Activated CD4-positive, alpha-beta memory T cell treated with anti-CD3 and anti-CD28 coated beads for 36 hours (primary cell): ENCODE measurements at regions of chr1 and their contacts with region 1.

Region 1: DNA sequence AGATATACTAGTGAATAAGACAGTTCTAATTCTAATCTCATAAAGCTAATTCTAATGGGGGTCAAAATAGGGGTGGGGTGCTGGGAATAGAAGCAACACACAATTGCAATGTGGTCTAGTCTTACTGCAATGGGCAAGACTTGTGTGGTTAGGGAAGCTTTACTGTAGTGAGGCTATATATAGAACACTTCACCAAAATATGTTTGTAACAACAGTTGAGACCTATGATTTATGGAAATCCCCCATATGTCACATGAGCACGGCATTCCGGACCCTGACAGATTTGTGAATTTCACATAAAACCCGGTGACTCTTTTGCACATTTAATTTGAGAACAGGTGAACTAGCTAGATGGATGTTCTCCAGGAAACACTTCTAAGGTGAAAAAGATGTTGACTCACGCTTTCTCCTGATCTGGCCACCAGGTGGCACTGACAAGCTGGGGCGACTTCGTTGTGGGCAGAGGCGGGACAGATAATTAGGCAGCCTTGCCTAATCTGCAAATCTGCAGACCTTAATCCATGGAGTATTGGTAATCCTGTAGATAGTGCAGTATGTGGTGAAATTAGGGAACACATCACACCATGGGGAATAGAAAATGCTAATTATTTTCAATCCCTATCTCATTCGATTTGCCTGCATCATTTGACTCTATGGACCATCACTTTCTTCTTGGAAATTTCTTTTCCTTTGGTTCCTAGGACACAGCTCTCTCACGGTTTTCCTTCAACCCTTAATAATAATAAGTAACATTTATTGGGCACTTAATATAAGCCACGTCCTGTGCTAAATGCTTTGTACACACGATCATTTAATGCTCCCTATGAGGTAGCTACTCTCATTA is 37.7 kb downstream of the KIAA0040 start:
- DNase-seq: peak; percentile 82
- H3K4me3 Mint-ChIP-seq: no peak overlapping the region
- H3K27ac Mint-ChIP-seq: no peak overlapping the region
- H3K4me1 Mint-ChIP-seq: peaks cover 20% of the 10 kb centered on the region
- H3K27me3 Mint-ChIP-seq: peaks cover 22% of the 10 kb centered on the region

Region 2: GRCh38 chr1:174858301-174858700 is 296.6 kb before region 1 on chr1:
- CTCF ChIA-PET with region 1: no interaction called
- POLR2A ChIA-PET with region 1: no interaction called
- intact Hi-C with region 1: no loop called
- DNase-seq: no peak
- H3K4me3 Mint-ChIP-seq: no peak overlapping the region
- H3K27ac Mint-ChIP-seq: no peak overlapping the region
- H3K4me1 Mint-ChIP-seq: no peaks in the 10 kb centered on the region
- H3K27me3 Mint-ChIP-seq: no peaks in the 10 kb centered on the region

Region 3: GRCh38 chr1:175005085-175005783 is 149.6 kb before region 1 on chr1:
- CTCF ChIA-PET with region 1: no interaction called
- POLR2A ChIA-PET with region 1: no interaction called
- intact Hi-C with region 1: no loop called
- DNase-seq: peak; percentile 42
- H3K4me3 Mint-ChIP-seq: no peak overlapping the region
- H3K27ac Mint-ChIP-seq: peak overlapping the region; percentile 65
- H3K4me1 Mint-ChIP-seq: peaks cover 51% of the 10 kb centered on the region
- H3K27me3 Mint-ChIP-seq: no peaks in the 10 kb centered on the region

Region 4: DNA sequence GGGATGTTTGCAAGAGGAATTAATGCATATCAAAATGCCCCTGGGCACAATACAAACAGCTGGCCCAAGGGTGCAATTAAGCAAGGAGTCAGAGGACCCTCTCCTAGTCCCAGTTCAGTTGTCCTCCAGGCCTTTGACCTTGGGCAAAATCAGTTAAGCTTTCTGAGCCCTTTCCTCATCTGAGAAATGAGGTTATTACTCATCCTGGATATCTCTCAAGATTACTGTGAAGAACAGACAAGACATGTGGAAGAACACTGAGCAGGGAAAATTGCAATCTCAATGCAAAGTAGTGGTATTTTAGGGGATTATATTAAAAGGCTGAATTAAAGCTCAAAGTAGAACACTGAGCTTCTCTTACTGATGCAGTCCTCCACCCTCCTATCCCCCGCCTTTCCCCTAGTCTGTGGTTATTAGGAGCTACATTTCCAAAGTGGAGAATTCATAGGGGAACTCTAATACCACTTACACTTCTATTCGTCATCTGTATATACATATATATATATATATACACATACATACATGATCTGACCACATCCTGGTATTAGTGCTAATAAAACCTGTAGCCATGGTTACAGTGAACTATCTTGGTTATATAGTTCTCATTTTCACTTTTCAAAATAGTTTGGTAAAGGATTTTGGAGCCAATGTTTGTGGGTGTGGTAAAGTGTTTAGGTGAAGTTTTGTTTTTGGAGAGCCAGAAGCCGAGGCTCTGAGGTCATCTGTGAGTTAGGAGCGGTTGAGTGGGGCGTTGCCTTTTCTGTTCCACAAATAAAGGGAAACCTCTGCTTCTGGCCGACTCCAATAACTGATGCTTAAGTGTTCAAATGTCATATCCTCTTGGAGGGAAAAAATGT is 19.7 kb after region 1 on chr1:
- CTCF ChIA-PET with region 1: interaction called, 10 read pairs
- POLR2A ChIA-PET with region 1: no interaction called
- intact Hi-C with region 1: no loop called
- DNase-seq: no peak
- H3K4me3 Mint-ChIP-seq: no peak overlapping the region
- H3K27ac Mint-ChIP-seq: no peak overlapping the region
- H3K4me1 Mint-ChIP-seq: peaks cover 60% of the 10 kb centered on the region
- H3K27me3 Mint-ChIP-seq: no peaks in the 10 kb centered on the region

Region 5: DNA sequence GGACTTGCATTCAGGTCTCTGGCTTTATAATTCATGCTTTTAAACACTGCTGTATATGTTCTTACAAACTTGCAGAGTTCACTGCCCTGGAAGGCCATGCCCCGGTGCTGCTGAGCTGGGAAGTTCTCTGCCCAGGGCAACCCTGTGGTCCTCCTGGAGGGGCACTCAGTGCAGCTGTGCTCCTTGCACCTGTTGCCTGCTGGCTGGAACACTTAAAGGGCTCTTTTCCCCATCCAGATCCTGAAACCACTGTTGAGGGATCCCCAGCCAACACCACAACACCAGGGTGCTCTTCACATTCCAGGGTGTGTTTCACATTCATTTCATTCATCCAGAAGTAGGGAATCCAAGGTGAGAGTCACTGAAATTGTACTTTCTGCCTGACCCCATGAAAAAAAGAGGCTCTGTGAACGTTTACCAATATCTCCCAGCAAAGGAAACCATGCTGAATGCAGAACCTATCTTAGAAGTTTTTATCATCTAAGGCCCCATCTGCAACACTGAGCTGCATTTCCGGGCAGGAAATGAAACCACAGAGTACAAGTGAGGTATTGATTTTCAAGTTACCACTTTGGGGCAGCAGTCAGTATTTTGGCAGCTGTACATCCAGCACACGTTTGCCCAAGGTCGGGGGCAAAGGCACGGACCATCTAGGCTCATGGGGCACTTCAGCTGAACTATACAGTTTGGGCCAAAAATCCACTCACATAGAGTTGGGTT is 54.1 kb after region 1 on chr1:
- CTCF ChIA-PET with region 1: interaction called, 18 read pairs
- POLR2A ChIA-PET with region 1: no interaction called
- intact Hi-C with region 1: loop called (anchors 1 kb)
- DNase-seq: peak; percentile 64
- H3K4me3 Mint-ChIP-seq: peak overlapping the region; percentile 64
- H3K27ac Mint-ChIP-seq: peak overlapping the region; percentile 93
- H3K4me1 Mint-ChIP-seq: peaks cover 76% of the 10 kb centered on the region
- H3K27me3 Mint-ChIP-seq: no peaks in the 10 kb centered on the region

Region 6: DNA sequence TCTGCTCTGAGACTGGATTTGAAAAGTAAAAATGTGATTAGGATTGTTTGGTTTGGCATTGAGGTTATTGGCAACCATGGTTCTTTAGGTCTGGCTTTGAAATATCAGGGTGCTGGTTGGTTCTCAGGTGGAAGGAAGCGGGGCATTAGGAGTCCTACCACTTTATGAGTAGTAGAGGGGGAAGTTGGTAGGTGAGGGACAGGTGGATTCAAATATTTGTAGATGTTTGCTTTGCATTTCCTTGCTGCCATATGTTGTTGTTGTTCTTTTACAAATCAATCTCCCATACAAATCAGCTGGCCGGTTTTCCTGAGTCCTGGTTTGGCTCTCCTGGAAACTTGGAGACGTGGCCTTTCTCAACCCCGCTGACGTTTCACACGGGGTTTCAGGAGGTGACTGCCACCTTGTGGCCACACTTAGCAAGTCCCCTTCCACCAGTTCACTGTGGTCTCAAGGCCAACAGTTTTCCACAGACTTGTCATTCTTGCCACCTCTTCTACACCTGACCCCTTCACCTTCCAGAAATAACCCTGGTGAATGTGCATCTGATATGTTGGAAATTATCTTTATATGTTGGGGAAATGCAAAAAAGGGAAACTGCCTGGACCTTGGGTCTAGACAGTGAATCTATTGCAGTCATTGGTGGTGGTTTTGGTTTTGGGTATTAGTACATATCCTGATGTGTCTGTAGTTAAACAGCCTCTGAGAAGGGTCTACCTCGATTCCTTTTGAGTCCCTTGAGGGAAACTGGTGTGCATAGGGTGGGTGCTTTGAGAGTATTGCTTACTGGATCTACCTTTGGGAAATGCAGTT is 164.8 kb after region 1 on chr1:
- CTCF ChIA-PET with region 1: interaction called, 449 read pairs
- POLR2A ChIA-PET with region 1: interaction called, 7 read pairs
- intact Hi-C with region 1: loop called (anchors 1 kb)
- DNase-seq: peak; percentile 76
- H3K4me3 Mint-ChIP-seq: no peak overlapping the region
- H3K27ac Mint-ChIP-seq: no peak overlapping the region
- H3K4me1 Mint-ChIP-seq: peaks cover 14% of the 10 kb centered on the region
- H3K27me3 Mint-ChIP-seq: no peaks in the 10 kb centered on the region

Region 7: DNA sequence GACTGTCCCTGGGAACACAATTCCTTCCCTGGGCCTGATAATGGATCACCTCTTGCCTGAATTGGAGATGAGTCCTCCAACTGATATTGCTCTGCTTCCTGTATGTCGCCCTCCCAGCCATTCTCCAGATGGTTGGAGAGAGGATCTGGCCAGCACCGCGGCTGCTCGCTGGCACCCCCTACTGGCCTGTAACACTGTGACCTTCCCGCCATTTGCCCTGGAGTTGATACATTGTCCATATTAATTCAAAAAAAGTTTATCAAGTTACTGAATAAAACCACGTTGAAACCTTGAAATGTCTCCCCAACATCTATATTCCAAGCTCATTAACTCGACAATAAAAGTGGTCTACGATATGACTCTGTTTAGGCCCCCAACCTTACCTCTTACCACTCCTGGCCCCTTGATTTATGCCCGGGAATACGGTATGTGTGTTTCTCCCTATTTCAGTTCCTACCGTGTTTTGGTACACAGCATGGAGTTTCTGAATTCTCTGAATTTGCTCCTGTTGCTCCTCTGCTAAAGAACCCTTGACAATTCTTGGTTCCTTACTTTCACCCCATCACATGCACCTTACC is 279.5 kb after region 1 on chr1:
- CTCF ChIA-PET with region 1: interaction called, 4 read pairs
- POLR2A ChIA-PET with region 1: no interaction called
- intact Hi-C with region 1: loop called (anchors 2 kb)
- DNase-seq: peak; percentile 22
- H3K4me3 Mint-ChIP-seq: no peak overlapping the region
- H3K27ac Mint-ChIP-seq: no peak overlapping the region
- H3K4me1 Mint-ChIP-seq: no peaks in the 10 kb centered on the region
- H3K27me3 Mint-ChIP-seq: peaks cover 24% of the 10 kb centered on the region